Esophagus squamous epithelium (tissue), 5 donors: ENCODE measurements at regions of chr16 and their contacts with region 1.

Region 1: DNA sequence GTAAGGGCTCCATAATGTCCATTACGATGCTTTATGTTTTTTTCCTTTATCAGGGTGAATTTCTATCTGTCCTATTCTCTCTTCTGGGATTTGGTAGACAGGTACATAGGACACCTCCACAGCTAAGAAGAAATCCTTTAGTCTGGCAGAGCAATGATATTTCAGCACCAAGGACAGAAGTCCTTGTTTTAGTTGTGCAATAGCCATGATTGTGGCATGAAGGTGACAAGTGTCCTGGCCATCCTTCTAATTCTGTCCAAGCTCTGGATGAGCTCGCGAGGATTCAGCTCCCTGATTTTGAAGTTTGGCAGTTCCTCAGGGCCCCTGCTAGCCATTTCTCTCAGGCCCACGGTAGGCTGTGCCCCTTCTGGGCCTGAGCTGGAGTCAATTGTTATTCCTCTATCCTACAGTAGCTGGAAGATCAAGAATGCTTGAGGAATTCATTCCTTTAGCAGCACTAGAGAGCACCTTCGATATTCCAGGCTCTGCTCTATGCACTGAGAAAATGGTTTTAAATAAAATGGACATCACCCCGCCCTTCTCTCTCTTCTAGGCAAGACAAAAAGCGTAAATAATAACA is 320.8 kb downstream of the XYLT1 start:
- DNase-seq: no peak
- H3K4me3 ChIP-seq: no peak overlapping the region
- H3K27ac ChIP-seq: no peak overlapping the region
- H3K4me1 ChIP-seq: no peaks in the 10 kb centered on the region
- H3K27me3 ChIP-seq: no peaks in the 10 kb centered on the region
- CTCF ChIP-seq: no peak
- POLR2A ChIP-seq: no peak

Region 2: GRCh38 chr16:17101646-17102045 is 48.3 kb before region 1 on chr16:
- intact Hi-C with region 1: loop called (anchors 10 kb)
- DNase-seq: no peak
- H3K4me3 ChIP-seq: no peak overlapping the region
- H3K27ac ChIP-seq: no peak overlapping the region
- H3K4me1 ChIP-seq: no peaks in the 10 kb centered on the region
- H3K27me3 ChIP-seq: no peaks in the 10 kb centered on the region
- CTCF ChIP-seq: no peak
- POLR2A ChIP-seq: no peak